Heart right ventricle (tissue), 16 donors: ENCODE measurements at regions of chr6 and their contacts with region 1.

Region 1: DNA sequence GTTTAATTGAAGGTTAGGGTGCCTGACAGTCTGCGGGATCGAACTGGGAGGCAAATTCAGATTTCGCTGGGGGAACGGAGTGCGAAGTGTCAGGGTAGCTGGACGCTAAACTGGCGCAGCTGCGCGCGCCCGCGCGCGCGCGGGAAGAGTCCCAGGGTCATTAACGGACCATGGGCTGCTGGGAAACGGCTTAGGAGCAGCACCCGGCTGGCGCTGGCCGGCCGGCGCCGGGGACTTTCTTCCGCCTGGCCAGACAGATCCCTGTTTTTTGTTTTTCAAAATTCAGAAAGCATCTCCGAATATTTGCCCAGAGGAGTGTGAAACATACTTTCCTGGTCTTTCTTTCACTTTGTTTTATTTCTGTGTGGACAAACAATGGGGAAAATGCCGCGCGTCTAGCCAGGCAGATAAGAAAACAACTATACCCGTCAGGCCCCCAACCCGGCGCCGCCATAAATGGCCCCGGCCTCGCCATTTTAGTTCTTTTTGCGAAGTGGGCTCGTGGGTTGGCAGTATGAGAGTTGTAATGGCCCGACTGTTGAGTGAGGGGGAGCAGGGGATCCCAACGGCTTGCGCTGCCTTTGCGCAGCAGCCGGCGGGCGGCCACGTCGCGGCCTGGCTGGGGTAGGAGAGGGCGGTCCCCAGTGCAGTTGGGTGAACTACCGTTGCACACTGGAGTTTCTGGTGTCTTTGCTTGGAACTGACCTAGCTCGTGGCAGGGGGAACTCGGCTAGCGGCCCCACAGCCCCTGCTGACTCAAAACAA is 7.1 kb downstream of the HSPA1B start:
- DNase-seq: peak; percentile 90
- ATAC-seq: peak; percentile 87 to 95 (median 93)
- H3K4me3 ChIP-seq: peak overlapping the region; percentile 84 to 100 (median 93)
- H3K27ac ChIP-seq: peak overlapping the region; percentile 89 to 98 (median 96)
- H3K4me1 ChIP-seq: peaks cover 27 to 79% (median 62%) of the 10 kb centered on the region in 9 donors
- H3K27me3 ChIP-seq: no peaks in the 10 kb centered on the region
- CTCF ChIP-seq: no peak

Region 2: GRCh38 chr6:31541658-31542521 is 292.7 kb before region 1 on chr6 and contains the start of gene DDX39B:
- intact Hi-C with region 1: loop called in 3 of 10 experiments (anchors 10 kb)
- DNase-seq: peak; percentile 93 to 96
- ATAC-seq: peak; percentile 93 to 96 (median 94)
- H3K4me3 ChIP-seq: peak within 1 kb of the TSS; percentile 42 to 87 (median 73)
- H3K27ac ChIP-seq: peak within 1 kb of the TSS; percentile 81 to 100 (median 93)
- H3K4me1 ChIP-seq: peaks cover 22 to 55% (median 41%) of the 10 kb centered on the region in 9 donors
- H3K27me3 ChIP-seq: no peaks in the 10 kb centered on the region
- CTCF ChIP-seq: no peak
- total RNA-seq, gene DDX39B: 154 to 193 (median 172) TPM

Region 3: GRCh38 chr6:31680840-31681671 is 153.6 kb before region 1 on chr6 and contains the start of gene LY6G5C:
- intact Hi-C with region 1: loop called in 9 of 10 experiments (anchors 1 to 10 kb)
- DNase-seq: peak; percentile 79 to 86
- ATAC-seq: peak; percentile 84 to 94 (median 92)
- H3K4me3 ChIP-seq: peak within 1 kb of the TSS; percentile 42 to 68 (median 58)
- H3K27ac ChIP-seq: peak within 1 kb of the TSS in 9 of 10 donors; percentile 34 to 84 (median 66)
- H3K4me1 ChIP-seq: peaks cover 5 to 27% (median 22%) of the 10 kb centered on the region in 9 donors
- H3K27me3 ChIP-seq: no peaks in the 10 kb centered on the region
- CTCF ChIP-seq: peak; percentile 46 to 87 (median 78)
- total RNA-seq, gene LY6G5C: 1.2 to 3.5 (median 1.9) TPM

Region 4: GRCh38 chr6:31739639-31740396 is 94.8 kb before region 1 on chr6 and contains the start of gene MSH5:
- intact Hi-C with region 1: loop called in 4 of 10 experiments (anchors 5 to 10 kb)
- DNase-seq: peak; percentile 97 to 99
- ATAC-seq: peak; percentile 90 to 96 (median 94)
- H3K4me3 ChIP-seq: peak within 1 kb of the TSS; percentile 56 to 94 (median 76)
- H3K27ac ChIP-seq: peak within 1 kb of the TSS in 9 of 10 donors; percentile 20 to 98 (median 66)
- H3K4me1 ChIP-seq: peaks cover 4 to 42% (median 38%) of the 10 kb centered on the region in 9 donors
- H3K27me3 ChIP-seq: no peaks in the 10 kb centered on the region
- CTCF ChIP-seq: no peak
- total RNA-seq, gene MSH5: 0.89 to 4.3 (median 2.6) TPM

Region 5: GRCh38 chr6:31776989-31777666 is 57.5 kb before region 1 on chr6 and contains the start of gene VWA7:
- intact Hi-C with region 1: loop called in 6 of 10 experiments (anchors 2 to 10 kb)
- DNase-seq: peak; percentile 64 to 77
- ATAC-seq: peak; percentile 78 to 93 (median 89)
- H3K4me3 ChIP-seq: peak within 1 kb of the TSS in 8 of 10 donors; percentile 13 to 47 (median 36)
- H3K27ac ChIP-seq: peak within 1 kb of the TSS; percentile 29 to 83 (median 74)
- H3K4me1 ChIP-seq: peaks cover 7 to 23% (median 13%) of the 10 kb centered on the region in 9 donors
- H3K27me3 ChIP-seq: no peaks in the 10 kb centered on the region
- CTCF ChIP-seq: no peak
- total RNA-seq, gene VWA7: 10.0 to 28.3 (median 20.8) TPM

Region 6: GRCh38 chr6:31862344-31863227 is 28.0 kb after region 1 on chr6 and contains the start of gene NEU1:
- intact Hi-C with region 1: loop called in 1 of 10 experiments (anchors 2 kb)
- DNase-seq: peak; percentile 99 to 100
- ATAC-seq: peak; percentile 97 to 99 (median 98)
- H3K4me3 ChIP-seq: peak within 1 kb of the TSS; percentile 65 to 93 (median 78)
- H3K27ac ChIP-seq: peak within 1 kb of the TSS; percentile 8 to 93 (median 84)
- H3K4me1 ChIP-seq: peaks cover 8 to 29% (median 21%) of the 10 kb centered on the region in 9 donors
- H3K27me3 ChIP-seq: no peaks in the 10 kb centered on the region
- CTCF ChIP-seq: no peak
- total RNA-seq, gene NEU1: 18.1 to 32.4 (median 22.3) TPM